Activated T-helper 2 cell treated with anti-CD3 and anti-CD28 coated beads, Interferon-gamma antibody, Interleukin-2, Interleukin-4, amounts not matched to agents 10 μg/mL and 5 μg/mL and 100 μg/mL, durations not matched to agents 14 hours and 24 hours and 36 hours (primary cell): ENCODE measurements at regions of chr5 and their contacts with region 1.

Region 1: DNA sequence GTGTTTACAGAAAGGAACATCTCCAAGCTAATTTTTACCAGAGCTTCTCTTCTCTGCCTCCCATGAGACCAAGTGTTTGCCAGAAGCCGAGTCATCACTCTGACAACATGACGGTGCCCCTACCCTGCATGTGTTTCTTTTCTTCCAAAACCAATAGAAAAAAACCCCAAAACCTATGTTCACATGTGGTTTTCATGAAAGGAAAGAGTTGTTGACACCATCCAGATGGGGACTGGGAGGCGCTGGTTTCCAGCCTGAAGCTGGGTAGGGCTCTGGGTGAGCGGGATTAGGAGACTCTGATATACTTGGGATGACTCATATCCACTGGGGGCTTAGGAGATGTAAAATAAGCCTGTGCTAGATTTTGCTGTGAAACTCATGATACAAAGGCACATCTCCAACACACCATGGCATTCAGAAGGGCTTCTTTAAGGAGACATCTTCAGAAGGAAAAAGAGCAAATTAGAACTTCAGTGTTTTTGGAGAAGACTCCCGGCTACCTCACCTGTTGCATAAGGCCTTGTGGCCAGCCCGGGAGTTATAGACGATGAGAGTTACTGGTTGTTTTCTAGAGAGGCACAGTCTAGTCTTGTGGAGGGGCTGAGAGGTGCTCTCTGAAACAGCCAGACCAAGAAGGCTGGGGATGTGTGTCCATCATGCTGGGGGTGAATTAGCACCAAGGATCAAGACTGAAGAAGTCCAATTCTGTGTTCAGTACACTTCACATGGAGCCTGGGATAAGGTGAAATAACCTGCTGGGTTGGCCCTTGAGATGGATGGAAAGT is 108.9 kb upstream of the LHFPL2 start:
- DNase-seq: no peak
- H3K4me3 Mint-ChIP-seq: no peak overlapping the region
- H3K27ac Mint-ChIP-seq: peak overlapping the region; percentile 3
- H3K4me1 Mint-ChIP-seq: peaks cover 21% of the 10 kb centered on the region
- H3K27me3 Mint-ChIP-seq: peaks cover 7% of the 10 kb centered on the region

Region 2: DNA sequence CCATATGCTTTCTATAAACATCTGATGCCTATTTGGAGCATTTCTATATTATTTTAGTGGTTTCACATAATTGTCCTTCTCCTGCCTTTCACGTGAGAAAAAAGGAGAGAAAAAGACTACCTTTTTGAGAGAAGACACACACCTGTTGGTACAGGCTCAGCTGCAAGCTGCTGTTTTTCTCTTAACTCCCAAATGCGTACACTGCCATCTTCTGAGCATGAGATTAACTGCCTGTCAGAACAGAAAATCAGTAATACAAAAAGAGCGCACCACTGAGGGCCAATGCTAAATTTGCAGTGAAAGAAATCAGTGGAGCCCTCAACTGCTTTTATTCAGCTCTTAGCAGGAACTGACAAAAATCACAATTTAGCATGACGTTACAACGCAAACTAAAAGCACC is 1320.3 kb before region 1 on chr5:
- intact Hi-C with region 1: no loop called
- DNase-seq: no peak
- H3K4me3 Mint-ChIP-seq: no peak overlapping the region
- H3K27ac Mint-ChIP-seq: no peak overlapping the region
- H3K4me1 Mint-ChIP-seq: peaks cover 2% of the 10 kb centered on the region
- H3K27me3 Mint-ChIP-seq: no peaks in the 10 kb centered on the region

Region 3: DNA sequence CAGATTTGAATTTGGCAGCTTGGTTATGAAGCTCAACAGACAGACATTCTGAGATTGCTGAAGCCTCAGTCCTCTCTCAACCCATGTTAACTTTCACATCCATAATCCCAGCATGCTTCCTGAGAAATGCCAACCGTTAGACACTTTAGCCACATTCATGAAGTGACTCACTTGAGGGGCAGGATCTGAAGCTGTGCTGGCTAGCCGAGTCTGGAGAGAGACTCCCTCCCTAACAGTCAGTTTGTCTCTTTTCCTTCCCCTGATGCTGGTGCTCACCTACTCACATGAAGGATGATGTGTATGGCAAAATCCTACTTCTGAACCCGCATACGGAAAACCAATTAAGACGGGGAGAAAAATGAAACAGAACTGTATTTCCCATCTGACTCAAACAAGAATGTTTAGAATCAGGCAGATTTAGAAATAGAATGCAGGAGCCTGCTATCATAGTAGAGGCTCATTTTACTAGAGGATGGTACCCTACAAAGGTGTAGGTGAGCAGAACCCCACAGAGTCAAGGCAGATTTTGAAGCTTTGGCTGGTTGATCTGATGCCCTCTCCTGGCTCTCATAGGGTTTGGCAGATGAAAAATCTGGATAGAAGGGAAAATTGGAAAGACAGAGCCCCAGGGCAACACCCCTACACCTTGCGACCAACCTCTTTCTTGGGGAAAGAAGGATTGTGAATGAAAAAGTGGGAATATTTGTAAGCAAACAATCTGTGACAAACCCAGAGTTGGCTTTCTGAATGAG is 42.0 kb after region 1 on chr5:
- intact Hi-C with region 1: loop called (anchors 5 kb)
- DNase-seq: no peak
- H3K4me3 Mint-ChIP-seq: no peak overlapping the region
- H3K27ac Mint-ChIP-seq: no peak overlapping the region
- H3K4me1 Mint-ChIP-seq: peaks cover 9% of the 10 kb centered on the region
- H3K27me3 Mint-ChIP-seq: no peaks in the 10 kb centered on the region